ENCODE measurements at regions of chr5 and their contacts with region 1.

Region 1: DNA sequence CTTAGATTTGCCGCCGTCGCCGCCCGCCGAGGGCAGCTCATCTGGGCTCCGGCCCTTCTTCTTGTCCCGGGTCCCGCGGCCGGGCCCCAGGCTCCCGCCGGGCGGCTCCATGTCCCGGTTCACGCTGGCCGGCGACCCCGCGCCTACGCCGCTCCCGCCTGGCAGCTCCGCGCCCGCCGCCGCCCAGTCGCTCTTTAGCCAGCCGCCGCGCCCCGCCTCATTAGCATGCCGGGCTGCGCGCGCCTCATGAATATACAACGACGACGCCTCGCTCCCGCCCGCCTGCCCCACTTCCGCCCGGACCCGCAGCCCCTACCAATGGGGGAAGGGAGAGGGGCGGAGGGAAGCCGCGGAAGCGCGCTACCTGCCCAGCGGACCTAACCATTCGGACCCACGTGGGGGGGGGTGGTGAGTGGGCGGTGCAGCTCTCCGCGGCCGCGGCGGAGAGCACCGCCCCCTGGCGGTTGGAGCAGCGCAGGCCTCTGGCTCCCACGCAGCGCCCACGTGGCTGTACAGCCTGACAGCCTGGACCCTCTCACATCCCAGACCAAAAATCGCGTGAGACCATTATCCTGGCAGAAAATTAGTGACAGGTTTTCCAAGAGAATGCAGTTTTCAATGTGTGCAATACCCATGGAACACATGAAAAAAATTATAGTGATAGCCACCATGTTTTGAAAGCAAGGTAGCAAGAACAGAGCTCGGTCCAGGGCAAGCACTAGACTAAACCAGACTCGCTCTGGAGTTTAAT is at the start of gene DIAPH1:
- DNase-seq: peak; percentile 88 to 96
- H3K4me3 ChIP-seq: peak within 1 kb of the TSS; percentile 85
- H3K27ac ChIP-seq: peak within 1 kb of the TSS; percentile 77
- H3K4me1 ChIP-seq: peaks cover 18% of the 10 kb centered on the region
- H3K27me3 ChIP-seq: no peaks in the 10 kb centered on the region
- CTCF ChIP-seq: peak; percentile 92
- total RNA-seq, gene DIAPH1: 148 and 157 TPM in 2 replicates

Region 2: DNA sequence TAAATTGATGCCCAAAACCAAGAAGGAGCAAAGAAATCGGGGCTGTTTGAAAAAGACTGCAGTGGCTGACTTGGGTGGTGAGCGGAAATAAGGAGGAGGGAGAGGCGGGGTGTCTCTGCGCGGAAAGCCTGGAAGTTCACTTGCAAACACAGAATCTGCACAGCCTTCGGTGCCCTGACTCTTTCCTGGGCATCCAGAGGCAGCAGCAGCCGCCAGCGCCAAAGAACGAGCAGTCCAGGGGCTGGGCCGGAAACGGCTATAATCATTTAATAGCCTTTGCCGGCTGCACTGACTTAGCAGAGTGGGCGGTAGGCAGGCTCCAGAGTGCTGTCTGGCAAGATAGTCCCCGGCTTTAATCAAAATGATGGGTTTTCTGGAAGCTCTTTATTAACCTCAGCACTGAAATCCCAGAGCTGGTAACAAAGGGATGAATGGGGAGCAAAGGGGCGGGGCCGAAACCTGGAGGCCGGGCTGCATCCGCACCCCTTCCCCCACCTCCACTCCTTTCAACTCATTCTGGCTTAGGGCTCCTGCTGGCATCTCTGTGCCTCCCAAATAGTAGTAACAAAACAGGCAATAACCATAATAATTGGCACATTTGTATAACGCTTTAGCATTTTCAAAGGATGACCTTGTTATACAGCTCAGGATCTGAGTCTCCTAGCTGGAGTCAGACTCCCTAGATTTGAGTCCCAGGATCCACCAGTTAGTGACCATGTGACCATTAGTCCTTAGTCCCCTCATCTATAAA is 617.0 kb before region 1 on chr5:
- CTCF ChIA-PET with region 1: no interaction called
- POLR2A ChIA-PET with region 1: no interaction called
- intact Hi-C with region 1: loop called (anchors 2 kb)
- DNase-seq: peak in 1 of 2 experiments; percentile 37
- H3K4me3 ChIP-seq: peak overlapping the region; percentile 41; the same call in 1 of the 2 replicates
- H3K27ac ChIP-seq: peak overlapping the region; percentile 43; the same call in 1 of the 2 replicates
- H3K4me1 ChIP-seq: peaks cover 16% of the 10 kb centered on the region; the same call in 1 of the 2 replicates
- H3K27me3 ChIP-seq: no peaks in the 10 kb centered on the region
- CTCF ChIP-seq: no peak

Region 3: DNA sequence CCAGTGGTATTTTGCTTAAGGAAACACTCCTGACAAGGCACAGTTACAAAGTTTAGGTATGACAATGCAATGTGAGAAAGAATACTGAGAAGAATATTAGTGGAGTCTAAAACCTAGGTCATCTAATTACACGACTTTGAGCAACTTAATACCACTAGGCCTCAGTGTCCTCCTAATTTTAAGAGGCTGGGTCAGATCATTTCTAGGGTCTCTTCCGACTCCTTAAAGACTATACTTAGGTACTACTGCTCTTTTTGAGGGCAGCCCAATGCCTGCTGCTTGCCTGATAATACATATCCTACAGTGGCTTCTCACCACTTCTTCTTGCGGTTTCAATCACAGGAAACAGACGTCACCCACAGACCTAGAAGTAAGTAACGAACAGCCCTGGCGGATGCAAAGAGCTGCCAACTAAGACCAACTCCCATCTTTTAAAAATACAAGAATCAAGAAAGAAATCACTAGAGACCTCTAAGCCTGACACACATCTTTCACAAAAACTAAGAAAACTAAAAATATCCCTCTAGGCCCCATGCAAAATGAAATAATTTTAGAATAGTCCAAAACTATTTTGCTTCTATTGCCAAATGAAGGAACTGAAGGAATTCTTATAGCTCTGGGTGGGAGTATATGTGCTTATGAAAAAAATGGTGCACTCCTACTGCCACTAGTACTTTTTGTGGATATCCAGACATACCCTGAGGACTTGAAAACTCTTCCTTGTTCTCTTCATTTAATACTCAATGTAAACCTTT is 13.3 kb before region 1 on chr5:
- CTCF ChIA-PET with region 1: interaction called, 9 read pairs
- POLR2A ChIA-PET with region 1: interaction called, 5 read pairs
- intact Hi-C with region 1: loop called (anchors 1 kb)
- DNase-seq: no peak
- H3K4me3 ChIP-seq: no peak overlapping the region
- H3K27ac ChIP-seq: peak overlapping the region; percentile 70
- H3K4me1 ChIP-seq: peaks cover 24% of the 10 kb centered on the region
- H3K27me3 ChIP-seq: no peaks in the 10 kb centered on the region
- CTCF ChIP-seq: no peak

Region 4: DNA sequence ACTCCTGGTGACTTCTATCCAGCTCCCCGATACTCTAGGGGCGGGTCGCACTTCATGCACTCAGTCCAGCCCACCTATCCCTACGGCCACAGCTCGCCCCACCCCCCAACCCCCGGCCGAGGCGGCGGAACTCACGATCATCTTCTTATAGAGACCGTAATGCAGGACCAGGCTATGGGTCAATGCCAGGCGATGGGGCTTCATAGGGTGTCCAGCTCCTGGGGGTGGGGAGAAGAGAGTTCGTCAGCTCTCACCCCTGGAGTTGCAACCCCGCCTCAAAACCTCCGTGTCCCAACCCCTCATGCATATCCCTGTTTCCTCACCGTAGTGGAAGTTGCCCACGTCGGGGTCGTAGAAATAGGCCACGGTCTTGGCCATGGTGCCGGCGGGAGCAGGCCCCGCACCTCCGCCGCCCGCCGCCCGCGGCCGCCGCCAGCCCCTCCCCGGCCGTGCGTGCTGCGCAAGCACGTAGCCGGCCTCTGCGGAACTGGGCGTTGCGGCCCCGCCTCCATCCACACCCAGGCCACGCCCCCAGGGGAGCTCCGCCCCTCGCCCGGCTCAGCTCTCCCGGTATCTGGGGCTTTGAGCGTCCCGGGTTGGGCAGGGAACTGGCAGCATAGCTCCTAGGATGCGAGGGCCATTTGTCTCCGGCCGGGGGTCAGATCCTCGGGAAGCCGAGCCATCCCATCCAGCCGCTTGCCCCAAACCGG is 17.6 kb after region 1 on chr5 and contains the starts of genes HDAC3 and RELL2:
- CTCF ChIA-PET with region 1: interaction called, 8 read pairs
- POLR2A ChIA-PET with region 1: interaction called, 7 read pairs
- intact Hi-C with region 1: loop called (anchors 1 kb)
- DNase-seq: peak; percentile 70 to 95
- H3K4me3 ChIP-seq: peak within 1 kb of the TSS; percentile 79
- H3K27ac ChIP-seq: no peak within 1 kb of the TSS
- H3K4me1 ChIP-seq: peaks cover 23% of the 10 kb centered on the region
- H3K27me3 ChIP-seq: no peaks in the 10 kb centered on the region
- CTCF ChIP-seq: no peak
- total RNA-seq, gene HDAC3: 76.0 and 87.0 TPM in 2 replicates
- total RNA-seq, gene RELL2: 3.3 and 5.0 TPM in 2 replicates

Region 5: DNA sequence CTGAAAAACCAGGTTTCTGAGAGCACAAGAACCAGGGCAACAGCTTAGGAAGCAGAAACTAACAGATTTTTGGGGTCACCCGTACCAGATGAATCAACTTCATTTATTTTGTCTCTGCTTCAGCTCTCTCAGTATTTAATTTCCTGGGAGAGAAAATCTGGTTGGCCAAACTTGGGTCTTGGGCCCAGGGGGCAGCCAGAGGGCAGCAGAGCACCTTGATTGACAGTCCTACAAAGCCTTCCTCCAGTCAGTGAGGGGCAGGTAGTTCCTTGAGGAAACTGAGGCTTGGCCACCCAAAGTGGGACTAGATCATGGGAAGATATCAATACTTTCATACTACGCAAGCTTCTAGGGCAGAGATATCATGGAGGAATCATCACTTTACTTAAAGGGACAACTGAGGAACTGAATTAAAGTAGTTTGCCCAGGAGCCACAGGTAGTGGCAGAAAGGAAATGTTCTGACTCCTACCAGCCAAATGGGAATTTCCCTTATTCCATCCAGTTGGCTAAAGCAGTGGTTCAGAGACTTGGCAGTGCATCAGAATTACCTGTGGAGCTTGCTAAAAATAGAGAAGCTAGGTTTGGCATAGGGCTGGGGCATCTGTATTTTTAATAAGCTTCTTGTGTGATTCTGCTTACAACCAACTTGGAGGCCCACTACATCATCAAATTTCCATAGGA is 1129.7 kb after region 1 on chr5:
- CTCF ChIA-PET with region 1: no interaction called
- POLR2A ChIA-PET with region 1: interaction called, 16 read pairs
- intact Hi-C with region 1: no loop called
- DNase-seq: no peak
- H3K4me3 ChIP-seq: no peak overlapping the region
- H3K27ac ChIP-seq: no peak overlapping the region
- H3K4me1 ChIP-seq: peaks cover 36% of the 10 kb centered on the region
- H3K27me3 ChIP-seq: no peaks in the 10 kb centered on the region
- CTCF ChIP-seq: peak; percentile 59

Measured in PC-9 (cell line).